ENCODE measurements at regions of chr11 and their contacts with region 1.

Region 1: DNA sequence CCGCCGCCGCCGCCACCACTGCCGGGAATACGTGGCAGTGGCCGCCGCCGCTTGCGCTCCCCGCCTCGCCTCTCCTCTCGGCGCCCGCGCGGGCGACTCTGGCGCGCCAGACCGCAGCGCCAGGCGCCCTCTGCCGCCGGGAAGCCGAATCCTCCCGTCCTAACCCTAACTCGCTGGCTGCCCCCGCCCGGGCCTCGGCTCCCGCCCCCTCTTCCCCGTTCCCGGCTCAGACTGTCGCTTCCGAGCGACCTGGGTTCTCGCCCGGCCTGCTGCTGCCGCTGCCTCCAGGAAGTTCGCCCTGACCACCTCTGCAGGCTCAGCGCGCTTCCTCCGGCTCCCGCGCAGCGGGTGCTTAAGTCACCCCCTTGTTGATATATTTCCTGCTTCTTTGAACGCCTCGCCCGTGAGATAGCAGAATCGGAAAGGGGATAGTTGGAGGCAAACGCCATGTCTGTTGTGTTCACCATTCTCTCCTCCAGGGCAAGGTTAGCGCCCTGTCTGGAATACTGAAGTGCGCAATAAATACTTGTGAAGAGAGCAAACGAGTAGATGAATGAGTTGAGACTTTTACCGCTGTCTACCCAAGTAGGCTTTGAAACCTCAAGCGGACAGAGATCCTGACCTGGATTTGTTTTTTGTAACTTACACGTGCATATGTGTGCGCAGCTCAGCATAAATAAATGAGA is at the start of gene SMCO4:
- DNase-seq: peak; percentile 91 to 96
- ATAC-seq: peak; percentile 95
- H3K4me3 ChIP-seq: peak within 1 kb of the TSS; percentile 76 to 92
- H3K27ac ChIP-seq: peak within 1 kb of the TSS; percentile 28 to 82
- H3K4me1 ChIP-seq: no peaks in the 10 kb centered on the region
- H3K27me3 ChIP-seq: no peaks in the 10 kb centered on the region
- total RNA-seq, gene SMCO4: 24.9 to 26.4 TPM

Region 2: GRCh38 chr11:93234602-93235207 is 308.7 kb before region 1 on chr11:
- intact Hi-C with region 1: loop called (anchors 2 to 5 kb)
- DNase-seq: peak; percentile 83 to 89
- ATAC-seq: peak; percentile 95
- H3K4me3 ChIP-seq: no peak overlapping the region
- H3K27ac ChIP-seq: no peak overlapping the region
- H3K4me1 ChIP-seq: no peaks in the 10 kb centered on the region
- H3K27me3 ChIP-seq: no peaks in the 10 kb centered on the region

Region 3: DNA sequence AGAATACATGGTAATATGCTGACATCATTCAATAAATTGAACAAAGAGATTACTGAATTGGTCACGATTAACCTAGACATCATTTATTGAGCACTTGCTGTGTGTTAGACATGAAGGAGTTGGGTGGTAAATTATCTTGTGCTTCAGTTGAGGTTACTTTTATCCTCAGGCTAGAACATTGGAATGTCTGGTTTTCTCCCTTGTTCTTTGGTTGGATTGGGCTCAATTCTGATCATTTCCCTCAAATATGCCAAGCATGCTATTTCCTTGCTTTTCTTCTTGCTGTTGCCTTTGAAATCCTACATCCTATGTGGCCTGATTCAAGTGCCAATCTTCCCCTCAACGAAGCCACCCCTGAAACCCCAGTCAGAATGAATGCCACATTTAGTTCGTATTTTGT is 147.1 kb before region 1 on chr11:
- intact Hi-C with region 1: loop called in 1 of 2 experiments (anchors 10 kb)
- DNase-seq: no peak
- ATAC-seq: no peak
- H3K4me3 ChIP-seq: no peak overlapping the region
- H3K27ac ChIP-seq: no peak overlapping the region
- H3K4me1 ChIP-seq: peaks cover 0 to 4% of the 10 kb centered on the region in 2 donors
- H3K27me3 ChIP-seq: peaks cover 0 to 1% of the 10 kb centered on the region in 2 donors

Region 4: DNA sequence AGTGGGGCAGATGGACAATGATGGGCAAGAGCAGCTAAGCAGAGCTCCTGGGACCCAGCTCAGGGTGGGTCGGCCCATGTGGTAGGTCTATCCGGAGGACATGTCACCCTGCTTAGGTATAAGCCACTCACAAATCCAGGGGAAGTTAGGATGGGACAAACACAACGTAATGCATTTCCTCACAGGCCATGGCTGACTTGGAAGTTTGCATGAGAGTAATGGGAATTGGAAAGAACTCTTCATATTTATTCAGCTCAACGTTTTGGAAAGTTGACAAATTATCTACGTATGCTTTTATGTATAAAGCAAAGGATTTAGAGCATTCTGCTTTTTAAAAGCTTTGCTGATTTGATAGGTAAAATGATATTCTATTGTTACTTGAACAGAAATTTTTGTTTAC is 75.1 kb before region 1 on chr11:
- intact Hi-C with region 1: no loop called
- DNase-seq: no peak
- ATAC-seq: no peak
- H3K4me3 ChIP-seq: no peak overlapping the region
- H3K27ac ChIP-seq: no peak overlapping the region
- H3K4me1 ChIP-seq: no peaks in the 10 kb centered on the region
- H3K27me3 ChIP-seq: no peaks in the 10 kb centered on the region

Region 5: DNA sequence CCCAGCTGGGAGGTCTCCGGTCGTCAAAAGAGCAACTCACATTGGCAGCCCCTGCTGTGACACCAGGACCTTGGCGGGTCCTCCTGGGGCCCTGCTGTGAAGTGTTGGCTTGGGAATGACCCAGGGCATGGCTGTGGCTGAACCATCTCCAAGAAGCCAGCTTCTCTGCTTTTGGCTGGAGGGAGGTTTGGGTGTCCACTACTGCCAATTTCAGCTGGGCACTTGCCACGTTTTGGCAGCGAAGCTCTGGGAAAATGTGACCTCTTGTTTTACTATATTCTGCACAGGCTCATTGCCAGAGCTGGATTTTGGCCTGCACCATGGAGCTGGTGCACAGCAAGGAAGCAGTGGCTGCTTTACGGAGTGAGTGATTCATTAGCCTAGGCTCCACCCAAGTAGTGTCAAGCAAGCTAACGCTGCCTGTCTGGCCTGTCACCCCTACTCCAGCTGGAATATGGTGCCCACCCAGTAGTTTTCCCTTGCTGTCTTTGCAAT is 24.0 kb after region 1 on chr11:
- intact Hi-C with region 1: loop called in 1 of 2 experiments (anchors 2 kb)
- DNase-seq: peak; percentile 92 to 93
- ATAC-seq: peak; percentile 93
- H3K4me3 ChIP-seq: no peak overlapping the region
- H3K27ac ChIP-seq: peak overlapping the region in 1 of 2 donors; percentile 55
- H3K4me1 ChIP-seq: peaks cover 0 to 1% of the 10 kb centered on the region in 2 donors
- H3K27me3 ChIP-seq: no peaks in the 10 kb centered on the region

Region 6: DNA sequence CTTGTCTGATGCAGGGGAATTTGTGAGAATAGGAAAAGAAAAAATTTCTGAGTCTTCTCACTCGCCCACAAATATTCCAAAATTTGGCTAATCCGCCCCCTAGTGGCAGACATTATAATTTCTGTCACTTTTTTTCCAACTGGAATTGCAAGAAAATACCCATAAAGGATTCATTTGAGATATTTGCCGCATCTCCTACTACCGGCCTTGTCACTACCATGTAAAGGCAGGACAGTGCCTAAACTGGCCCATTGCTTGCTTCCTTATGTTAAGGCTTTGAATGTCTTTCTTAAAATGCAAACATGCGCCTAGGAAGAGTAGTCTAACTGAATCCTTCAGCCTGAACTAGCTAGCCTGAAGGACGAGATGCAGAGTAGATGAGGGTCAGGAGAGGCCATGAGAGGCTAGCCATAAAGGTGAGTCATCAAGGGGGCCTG is 108.7 kb after region 1 on chr11:
- intact Hi-C with region 1: loop called (anchors 5 kb)
- DNase-seq: no peak
- ATAC-seq: no peak
- H3K4me3 ChIP-seq: no peak overlapping the region
- H3K27ac ChIP-seq: no peak overlapping the region
- H3K4me1 ChIP-seq: no peaks in the 10 kb centered on the region
- H3K27me3 ChIP-seq: peaks cover 0 to 2% of the 10 kb centered on the region in 2 donors